ENCODE measurements at regions of chr11 and their contacts with region 1.

Region 1: GRCh38 chr11:59158206-59159068 is 13.5 kb upstream of the DTX4 start:
- DNase-seq: peak; percentile 60
- H3K4me3 Mint-ChIP-seq: no peak overlapping the region
- H3K27ac Mint-ChIP-seq: no peak overlapping the region
- H3K4me1 Mint-ChIP-seq: no peaks in the 10 kb centered on the region
- H3K27me3 Mint-ChIP-seq: peaks cover 28% of the 10 kb centered on the region
- CTCF ChIP-seq: peak; percentile 49

Region 2: DNA sequence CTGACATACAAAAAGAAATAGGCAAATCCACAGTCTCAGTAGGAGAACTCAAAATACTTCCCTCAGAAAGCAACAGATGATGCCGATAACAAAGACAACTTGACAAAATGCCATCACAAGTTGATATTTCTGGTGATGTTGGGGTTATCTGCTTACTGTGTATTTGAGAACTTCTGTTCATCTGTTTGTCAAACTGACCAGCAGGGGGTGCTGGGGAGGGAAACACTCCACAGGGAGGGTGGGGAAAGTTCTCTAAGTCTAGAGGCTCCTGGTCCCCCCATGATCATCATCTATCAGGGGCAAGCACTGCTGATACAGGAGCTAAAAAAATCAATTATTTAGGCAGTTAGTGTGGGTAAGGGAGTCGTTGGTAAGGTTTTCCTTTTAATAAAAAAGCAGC is 199.9 kb before region 1 on chr11:
- CTCF ChIA-PET with region 1: no interaction called
- intact Hi-C with region 1: loop called (anchors 10 kb)
- DNase-seq: peak; percentile 35
- H3K4me3 Mint-ChIP-seq: no peak overlapping the region
- H3K27ac Mint-ChIP-seq: no peak overlapping the region
- H3K4me1 Mint-ChIP-seq: no peaks in the 10 kb centered on the region
- H3K27me3 Mint-ChIP-seq: peaks cover 56% of the 10 kb centered on the region
- CTCF ChIP-seq: no peak

Region 3: DNA sequence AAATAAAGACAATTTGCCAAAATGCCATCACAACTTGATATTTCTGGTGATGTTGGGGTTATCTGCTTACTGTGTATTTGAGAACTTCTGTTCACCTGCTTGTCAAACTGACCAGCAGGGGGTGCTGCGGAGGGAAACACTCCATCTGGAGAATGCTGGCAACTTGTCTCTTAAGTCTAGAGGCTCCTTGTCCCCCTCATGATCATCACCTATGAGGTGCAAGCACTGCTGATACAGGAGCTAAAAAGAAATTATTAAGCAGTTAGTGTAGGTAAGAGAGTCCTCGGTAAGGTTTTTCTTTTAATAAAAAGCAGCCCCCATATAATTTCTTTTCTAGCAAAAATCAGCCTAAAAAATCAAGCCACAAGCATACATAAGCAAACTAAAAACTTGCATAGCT is 105.0 kb before region 1 on chr11:
- CTCF ChIA-PET with region 1: interaction called, 12 read pairs
- intact Hi-C with region 1: loop called (anchors 1 kb)
- DNase-seq: peak; percentile 80
- H3K4me3 Mint-ChIP-seq: no peak overlapping the region
- H3K27ac Mint-ChIP-seq: no peak overlapping the region
- H3K4me1 Mint-ChIP-seq: no peaks in the 10 kb centered on the region
- H3K27me3 Mint-ChIP-seq: peaks cover 39% of the 10 kb centered on the region
- CTCF ChIP-seq: peak; percentile 55

Region 4: GRCh38 chr11:59097113-59097708 is 61.2 kb before region 1 on chr11:
- CTCF ChIA-PET with region 1: interaction called, 10 read pairs
- intact Hi-C with region 1: loop called (anchors 1 kb)
- DNase-seq: peak; percentile 75
- H3K4me3 Mint-ChIP-seq: no peak overlapping the region
- H3K27ac Mint-ChIP-seq: no peak overlapping the region
- H3K4me1 Mint-ChIP-seq: peaks cover 10% of the 10 kb centered on the region
- H3K27me3 Mint-ChIP-seq: no peaks in the 10 kb centered on the region
- CTCF ChIP-seq: peak; percentile 56

Region 5: GRCh38 chr11:59142530-59143507 is 15.6 kb before region 1 on chr11 and contains the start of gene FAM111A:
- CTCF ChIA-PET with region 1: interaction called, 22 read pairs
- intact Hi-C with region 1: no loop called
- DNase-seq: peak; percentile 88
- H3K4me3 Mint-ChIP-seq: peak within 1 kb of the TSS; percentile 97
- H3K27ac Mint-ChIP-seq: peak within 1 kb of the TSS; percentile 93
- H3K4me1 Mint-ChIP-seq: peaks cover 48% of the 10 kb centered on the region
- H3K27me3 Mint-ChIP-seq: no peaks in the 10 kb centered on the region
- CTCF ChIP-seq: peak; percentile 14
- total RNA-seq, gene FAM111A: 87.9 and 91.6 TPM in 2 replicates

Region 6: DNA sequence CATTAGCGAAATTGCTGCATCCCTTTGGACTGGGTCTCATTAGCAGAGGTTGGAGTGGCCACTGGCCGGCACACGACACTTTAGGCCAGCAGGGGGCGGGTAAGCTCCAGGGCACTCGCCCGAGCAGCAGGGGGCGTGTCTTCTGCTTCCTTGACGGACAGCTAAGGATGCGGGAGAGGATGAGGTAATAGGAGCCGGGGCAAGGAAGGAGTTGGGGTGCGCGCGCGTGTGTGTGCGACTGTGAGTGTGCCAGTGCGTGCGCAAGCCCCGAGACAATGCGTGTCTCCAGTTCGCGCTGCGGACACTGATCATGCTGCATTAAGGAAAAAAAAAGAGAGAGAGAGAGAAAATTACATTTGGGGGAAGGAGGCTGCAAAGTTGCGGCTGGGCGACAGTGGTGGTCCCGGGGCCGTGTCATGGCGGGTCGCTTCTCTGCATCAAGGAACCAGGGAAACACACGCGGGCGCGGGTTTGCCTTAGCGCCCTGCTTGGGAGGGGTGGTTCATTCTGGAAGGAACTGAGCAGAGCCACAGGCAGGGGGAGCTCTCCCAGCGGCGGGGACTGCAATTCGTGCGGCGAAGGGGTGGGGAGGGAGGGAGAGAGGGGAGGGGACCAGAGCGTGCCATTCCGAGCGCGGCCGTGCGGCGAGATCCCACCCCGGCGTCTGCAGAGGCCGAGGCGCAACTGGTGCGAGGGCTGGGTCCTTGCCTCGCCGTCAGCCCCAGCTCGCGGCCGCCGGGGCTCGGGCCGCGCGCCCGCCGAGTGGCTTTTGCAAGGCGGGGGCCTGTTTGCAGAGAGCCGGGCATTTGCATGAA is 13.3 kb after region 1 on chr11 and contains the start of gene DTX4:
- CTCF ChIA-PET with region 1: interaction called, 12 read pairs
- intact Hi-C with region 1: no loop called
- DNase-seq: peak; percentile 96
- H3K4me3 Mint-ChIP-seq: no peak within 1 kb of the TSS
- H3K27ac Mint-ChIP-seq: peak within 1 kb of the TSS; percentile 82
- H3K4me1 Mint-ChIP-seq: peaks cover 24% of the 10 kb centered on the region
- H3K27me3 Mint-ChIP-seq: no peaks in the 10 kb centered on the region
- CTCF ChIP-seq: peak; percentile 78
- total RNA-seq, gene DTX4: 56.7 and 65.8 TPM in 2 replicates

Region 7: DNA sequence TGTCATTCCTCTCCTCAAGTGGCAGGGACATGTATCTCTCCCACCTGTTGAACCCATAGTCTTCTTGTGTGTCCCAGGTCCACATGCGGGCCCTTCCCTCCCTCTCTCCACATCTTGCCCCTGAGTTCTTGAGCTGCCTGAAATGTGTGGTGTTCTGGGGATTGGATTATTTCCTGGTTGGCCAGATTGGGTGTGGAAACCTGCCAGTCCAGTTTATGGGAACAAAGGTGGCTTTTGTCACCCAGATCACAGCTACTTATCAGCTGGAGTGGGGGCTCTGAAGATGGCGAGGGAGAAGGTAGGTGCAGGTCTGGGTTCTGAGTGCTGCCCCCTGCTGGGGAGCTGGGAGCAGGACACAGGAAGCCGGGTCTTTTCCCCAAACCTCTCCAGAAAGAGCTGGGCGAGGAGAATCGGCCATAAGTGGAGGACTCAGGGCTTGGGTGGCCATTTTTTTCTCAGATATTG is 27.7 kb after region 1 on chr11:
- CTCF ChIA-PET with region 1: interaction called, 10 read pairs
- intact Hi-C with region 1: no loop called
- DNase-seq: peak; percentile 95
- H3K4me3 Mint-ChIP-seq: peak overlapping the region; percentile 72
- H3K27ac Mint-ChIP-seq: peak overlapping the region; percentile 94
- H3K4me1 Mint-ChIP-seq: peaks cover 82% of the 10 kb centered on the region
- H3K27me3 Mint-ChIP-seq: no peaks in the 10 kb centered on the region
- CTCF ChIP-seq: peak; percentile 91

Region 8: GRCh38 chr11:59787816-59788215 is 629.4 kb after region 1 on chr11:
- CTCF ChIA-PET with region 1: no interaction called
- intact Hi-C with region 1: no loop called
- DNase-seq: no peak
- H3K4me3 Mint-ChIP-seq: peak overlapping the region; percentile 13
- H3K27ac Mint-ChIP-seq: peak overlapping the region; percentile 78
- H3K4me1 Mint-ChIP-seq: peaks cover 45% of the 10 kb centered on the region
- H3K27me3 Mint-ChIP-seq: no peaks in the 10 kb centered on the region
- CTCF ChIP-seq: no peak

Measured in Calu3 (cell line).